Activated T-helper 2 cell treated with anti-CD3 and anti-CD28 coated beads, Interferon-gamma antibody, Interleukin-2, Interleukin-4, amounts not matched to agents 10 μg/mL and 5 μg/mL and 100 μg/mL, durations not matched to agents 14 hours and 24 hours and 36 hours (primary cell): ENCODE measurements at regions of chr22 and their contacts with region 1.

Region 1: GRCh38 chr22:50582562-50583293 is at the start of gene CHKB:
- DNase-seq: peak; percentile 99
- H3K4me3 Mint-ChIP-seq: peak within 1 kb of the TSS; percentile 94
- H3K27ac Mint-ChIP-seq: peak within 1 kb of the TSS; percentile 95
- H3K4me1 Mint-ChIP-seq: peaks cover 12% of the 10 kb centered on the region
- H3K27me3 Mint-ChIP-seq: no peaks in the 10 kb centered on the region
- total RNA-seq, gene CHKB: 86.1 and 90.9 TPM in 2 replicates

Region 2: DNA sequence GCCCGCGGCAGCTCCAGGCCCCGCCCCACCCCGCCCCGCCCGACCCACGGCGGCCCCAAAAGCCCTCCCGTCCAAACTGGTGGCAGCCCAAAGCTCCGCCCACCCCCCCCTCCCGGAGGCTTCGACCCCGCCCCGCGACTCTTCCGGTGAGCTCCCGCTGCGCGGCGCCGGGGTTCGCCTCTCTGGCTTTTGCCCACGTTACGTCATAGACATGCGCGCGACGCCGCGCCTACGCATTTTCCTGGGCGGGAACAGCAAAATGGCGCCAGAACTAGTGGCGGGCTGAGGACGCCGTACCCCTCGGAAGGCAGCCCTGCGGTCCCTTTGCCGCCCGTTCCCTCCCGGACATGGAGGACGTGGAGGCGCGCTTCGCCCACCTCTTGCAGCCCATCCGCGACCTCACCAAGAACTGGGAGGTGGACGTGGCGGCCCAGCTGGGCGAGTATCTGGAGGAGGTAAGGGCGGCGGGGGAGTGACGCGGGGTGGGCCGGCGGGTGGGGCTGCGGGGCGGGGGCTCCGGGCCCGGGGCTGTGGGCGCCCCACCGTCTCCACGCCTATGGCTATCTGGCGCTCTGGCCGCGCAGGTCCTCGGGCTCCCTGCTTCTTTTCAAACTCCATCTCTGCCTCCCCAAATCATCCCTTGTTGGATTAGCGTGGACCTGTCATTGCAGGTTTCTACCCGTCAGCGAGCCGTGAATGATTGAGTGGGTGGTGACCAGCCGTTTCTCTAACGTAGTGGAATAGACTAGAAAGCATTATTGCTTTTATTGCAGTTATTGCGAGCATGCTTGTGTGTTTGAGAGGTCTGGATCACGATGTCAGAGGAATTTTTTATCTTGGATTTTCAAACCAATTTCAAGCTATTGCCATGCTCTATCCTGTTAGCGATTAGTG is 74.5 kb before region 1 on chr22 and contains the start of gene NCAPH2:
- intact Hi-C with region 1: loop called (anchors 2 kb)
- DNase-seq: peak; percentile 96
- H3K4me3 Mint-ChIP-seq: peak within 1 kb of the TSS; percentile 96
- H3K27ac Mint-ChIP-seq: peak within 1 kb of the TSS; percentile 94
- H3K4me1 Mint-ChIP-seq: peaks cover 16% of the 10 kb centered on the region
- H3K27me3 Mint-ChIP-seq: no peaks in the 10 kb centered on the region
- total RNA-seq, gene NCAPH2: 112 and 115 TPM in 2 replicates

Region 3: GRCh38 chr22:50530877-50531545 is 51.7 kb before region 1 on chr22:
- intact Hi-C with region 1: loop called (anchors 2 kb)
- DNase-seq: peak; percentile 83
- H3K4me3 Mint-ChIP-seq: peak overlapping the region; percentile 91
- H3K27ac Mint-ChIP-seq: peak overlapping the region; percentile 98
- H3K4me1 Mint-ChIP-seq: peaks cover 38% of the 10 kb centered on the region
- H3K27me3 Mint-ChIP-seq: no peaks in the 10 kb centered on the region

Region 4: DNA sequence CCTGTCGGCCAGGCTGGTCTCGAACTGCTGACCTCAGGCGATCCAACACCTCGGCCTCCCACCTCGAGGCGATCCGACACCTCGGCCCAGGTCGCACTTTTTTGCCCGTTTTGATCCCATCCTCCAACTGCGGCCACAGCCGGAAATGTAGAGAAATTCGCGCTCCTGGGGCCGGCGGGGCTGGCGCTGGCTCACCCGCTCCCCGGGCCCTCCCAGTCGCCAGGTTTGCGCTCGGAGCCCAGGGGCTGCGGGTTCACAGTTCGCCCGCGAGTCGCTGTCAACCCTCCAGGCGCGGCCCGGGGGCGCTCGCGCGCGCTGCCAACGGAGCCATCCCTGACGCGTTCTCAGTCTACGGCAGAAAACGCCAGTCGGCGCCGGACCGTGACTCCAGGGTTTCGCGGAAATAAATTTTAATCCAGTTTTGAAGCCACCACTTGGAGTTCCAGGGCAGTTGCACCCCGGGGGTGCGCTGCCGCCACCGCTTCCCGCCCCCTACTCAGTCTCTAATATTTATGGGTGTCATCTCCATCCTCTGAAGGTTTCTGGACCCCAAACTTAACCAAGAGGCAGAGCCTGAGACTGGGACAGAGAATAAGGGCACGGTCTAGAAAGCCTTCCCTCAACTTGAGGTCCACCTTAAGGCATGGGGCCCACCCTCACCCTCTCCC is 38.5 kb before region 1 on chr22:
- intact Hi-C with region 1: loop called (anchors 5 kb)
- DNase-seq: peak; percentile 73
- H3K4me3 Mint-ChIP-seq: peak overlapping the region; percentile 21
- H3K27ac Mint-ChIP-seq: peak overlapping the region; percentile 22
- H3K4me1 Mint-ChIP-seq: peaks cover 53% of the 10 kb centered on the region
- H3K27me3 Mint-ChIP-seq: no peaks in the 10 kb centered on the region

Region 5: DNA sequence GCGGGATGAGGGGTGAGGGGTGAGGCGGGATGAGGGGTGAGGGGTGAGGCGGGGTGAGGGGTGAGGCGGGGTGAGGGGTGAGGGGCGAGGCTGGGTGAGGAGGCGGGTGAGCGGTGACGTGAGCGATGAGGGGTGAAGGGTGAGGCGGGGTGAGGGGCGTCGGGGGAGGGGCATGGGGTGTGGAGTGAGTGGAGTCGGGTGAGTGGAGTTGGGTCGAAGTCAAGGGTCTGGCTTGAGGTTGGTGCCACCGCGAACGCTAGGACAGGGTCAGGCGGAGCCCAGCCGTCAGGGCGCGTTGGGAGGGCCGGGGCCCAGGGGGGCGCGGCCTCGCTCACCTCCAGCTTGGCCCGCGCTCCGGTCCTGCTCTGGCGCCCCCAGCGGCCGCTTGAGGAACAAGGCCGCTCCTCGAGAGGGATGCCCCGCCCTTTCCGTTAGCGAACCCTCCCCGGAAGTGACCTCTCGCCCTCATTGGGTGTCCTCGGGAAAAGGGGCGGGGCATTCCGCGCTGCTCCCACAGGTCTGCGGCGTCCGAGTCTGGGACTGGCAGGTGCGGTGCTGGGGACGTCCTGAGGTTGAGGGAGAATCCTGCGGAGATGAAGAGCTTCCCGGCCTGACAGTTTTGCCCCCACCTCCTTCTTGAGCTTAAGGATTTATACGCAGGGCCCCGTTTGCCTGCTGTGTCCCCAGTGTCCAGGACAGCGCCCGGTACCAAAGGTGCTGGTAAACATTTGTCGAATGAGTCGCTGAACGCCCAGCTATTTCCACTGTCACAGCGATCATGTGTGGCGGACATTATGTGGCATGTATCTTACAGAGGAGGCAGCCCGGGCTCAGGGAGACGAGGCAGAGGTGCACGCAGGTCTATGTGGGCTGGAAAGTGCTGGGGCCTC is 20.0 kb before region 1 on chr22 and contains the start of gene SYCE3:
- intact Hi-C with region 1: loop called (anchors 2 kb)
- DNase-seq: peak; percentile 96
- H3K4me3 Mint-ChIP-seq: peak within 1 kb of the TSS; percentile 89
- H3K27ac Mint-ChIP-seq: peak within 1 kb of the TSS; percentile 66
- H3K4me1 Mint-ChIP-seq: peaks cover 16% of the 10 kb centered on the region
- H3K27me3 Mint-ChIP-seq: peaks cover 20% of the 10 kb centered on the region
- total RNA-seq, gene SYCE3: 0.62 TPM in 1 of 2 replicates, not detected in the other

Region 6: DNA sequence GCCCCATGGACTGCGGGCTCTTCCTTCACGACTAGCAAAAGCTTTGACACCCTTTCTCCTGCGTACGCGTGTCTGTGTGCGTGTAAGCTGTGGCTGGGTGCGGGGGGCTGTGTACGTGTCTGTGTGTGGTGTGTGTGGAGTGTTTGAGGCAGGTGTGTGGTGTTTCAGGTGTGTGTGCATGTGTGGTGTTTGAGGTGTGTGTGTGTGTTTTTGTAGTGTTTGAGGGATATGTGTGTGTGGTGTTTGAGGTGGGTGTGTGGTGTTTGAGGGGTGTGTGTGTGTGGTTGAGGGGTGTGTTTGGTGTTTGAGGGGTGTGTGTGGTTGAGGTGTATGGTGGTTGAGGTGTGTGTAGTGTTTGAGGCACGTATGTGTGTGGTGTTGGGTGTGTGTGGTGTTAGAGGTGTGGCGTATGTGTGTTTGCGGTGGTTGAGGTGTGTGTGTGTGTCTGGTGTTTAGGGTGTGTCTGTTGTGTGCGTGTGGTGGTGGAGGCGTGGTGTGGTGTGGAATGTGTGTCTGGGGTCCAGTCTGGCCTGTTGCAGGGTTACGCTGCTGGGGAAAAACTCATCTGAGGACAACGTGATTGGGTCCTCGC is 45.9 kb after region 1 on chr22:
- intact Hi-C with region 1: no loop called
- DNase-seq: no peak
- H3K4me3 Mint-ChIP-seq: peak overlapping the region; percentile 92
- H3K27ac Mint-ChIP-seq: peak overlapping the region; percentile 53
- H3K4me1 Mint-ChIP-seq: peaks cover 15% of the 10 kb centered on the region
- H3K27me3 Mint-ChIP-seq: no peaks in the 10 kb centered on the region

Region 7: GRCh38 chr22:50691521-50691920 is 108.8 kb after region 1 on chr22:
- intact Hi-C with region 1: no loop called
- DNase-seq: no peak
- H3K4me3 Mint-ChIP-seq: no peak overlapping the region
- H3K27ac Mint-ChIP-seq: no peak overlapping the region
- H3K4me1 Mint-ChIP-seq: peaks cover 9% of the 10 kb centered on the region
- H3K27me3 Mint-ChIP-seq: peaks cover 12% of the 10 kb centered on the region